B cell (primary cell): ENCODE measurements at regions of chr3 and their contacts with region 1.

Region 1: GRCh38 chr3:67790043-67790442 is 135.6 kb upstream of the SUCLG2 start:
- DNase-seq: peak; percentile 60
- ATAC-seq: peak; percentile 58
- H3K4me3 ChIP-seq: no peak overlapping the region
- H3K4me3 Mint-ChIP-seq: no peak overlapping the region
- H3K27ac ChIP-seq: no peak overlapping the region
- H3K27ac Mint-ChIP-seq: no peak overlapping the region
- H3K4me1 ChIP-seq: no peaks in the 10 kb centered on the region
- H3K4me1 Mint-ChIP-seq: no peaks in the 10 kb centered on the region
- H3K27me3 ChIP-seq: no peaks in the 10 kb centered on the region
- H3K27me3 Mint-ChIP-seq: peaks cover 6% of the 10 kb centered on the region
- CTCF ChIP-seq: peak; percentile 73

Region 2: GRCh38 chr3:67593761-67594244 is 196.2 kb before region 1 on chr3:
- CTCF ChIA-PET with region 1: no interaction called
- POLR2A ChIA-PET with region 1: no interaction called
- intact Hi-C with region 1: loop called (anchors 5 kb)
- DNase-seq: no peak
- ATAC-seq: no peak
- H3K4me3 ChIP-seq: no peak overlapping the region
- H3K4me3 Mint-ChIP-seq: no peak overlapping the region
- H3K27ac ChIP-seq: no peak overlapping the region
- H3K27ac Mint-ChIP-seq: no peak overlapping the region
- H3K4me1 ChIP-seq: no peaks in the 10 kb centered on the region
- H3K4me1 Mint-ChIP-seq: peaks cover 9% of the 10 kb centered on the region
- H3K27me3 ChIP-seq: no peaks in the 10 kb centered on the region
- H3K27me3 Mint-ChIP-seq: no peaks in the 10 kb centered on the region
- CTCF ChIP-seq: no peak

Region 3: GRCh38 chr3:67774676-67775075 is 15.4 kb before region 1 on chr3:
- CTCF ChIA-PET with region 1: no interaction called
- POLR2A ChIA-PET with region 1: no interaction called
- intact Hi-C with region 1: no loop called
- DNase-seq: no peak
- ATAC-seq: no peak
- H3K4me3 ChIP-seq: no peak overlapping the region
- H3K4me3 Mint-ChIP-seq: no peak overlapping the region
- H3K27ac ChIP-seq: no peak overlapping the region
- H3K27ac Mint-ChIP-seq: no peak overlapping the region
- H3K4me1 ChIP-seq: peaks cover 0 to 2% of the 10 kb centered on the region in 2 donors
- H3K4me1 Mint-ChIP-seq: peaks cover 10% of the 10 kb centered on the region
- H3K27me3 ChIP-seq: no peaks in the 10 kb centered on the region
- H3K27me3 Mint-ChIP-seq: peaks cover 6% of the 10 kb centered on the region
- CTCF ChIP-seq: no peak

Region 4: GRCh38 chr3:67854663-67855062 is 64.6 kb after region 1 on chr3:
- CTCF ChIA-PET with region 1: no interaction called
- POLR2A ChIA-PET with region 1: no interaction called
- intact Hi-C with region 1: no loop called
- DNase-seq: no peak
- ATAC-seq: no peak
- H3K4me3 ChIP-seq: no peak overlapping the region
- H3K4me3 Mint-ChIP-seq: no peak overlapping the region
- H3K27ac ChIP-seq: no peak overlapping the region
- H3K27ac Mint-ChIP-seq: no peak overlapping the region
- H3K4me1 ChIP-seq: no peaks in the 10 kb centered on the region
- H3K4me1 Mint-ChIP-seq: no peaks in the 10 kb centered on the region
- H3K27me3 ChIP-seq: no peaks in the 10 kb centered on the region
- H3K27me3 Mint-ChIP-seq: no peaks in the 10 kb centered on the region
- CTCF ChIP-seq: no peak

Region 5: DNA sequence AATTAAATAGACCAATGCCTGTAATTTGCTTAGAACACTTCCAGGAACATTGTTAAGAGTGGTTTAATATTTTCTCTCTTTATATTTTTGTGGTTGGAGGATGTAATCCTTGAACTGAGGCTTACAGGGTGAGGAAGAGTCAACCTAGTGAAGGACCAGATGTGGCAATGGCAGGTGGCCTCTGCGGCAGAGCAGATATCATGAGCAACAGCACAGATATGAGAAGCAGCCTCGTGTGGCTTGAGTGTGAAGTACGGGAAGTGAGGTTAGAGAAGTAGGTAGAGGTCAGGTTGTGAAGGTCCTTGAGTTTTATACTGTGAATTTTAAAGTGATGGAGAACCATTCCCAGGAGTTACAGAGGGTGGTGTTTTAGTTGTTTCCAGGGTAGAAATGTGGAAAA is 282.0 kb after region 1 on chr3:
- CTCF ChIA-PET with region 1: no interaction called
- POLR2A ChIA-PET with region 1: no interaction called
- intact Hi-C with region 1: no loop called
- DNase-seq: no peak
- ATAC-seq: no peak
- H3K4me3 ChIP-seq: no peak overlapping the region
- H3K4me3 Mint-ChIP-seq: no peak overlapping the region
- H3K27ac ChIP-seq: no peak overlapping the region
- H3K27ac Mint-ChIP-seq: no peak overlapping the region
- H3K4me1 ChIP-seq: no peaks in the 10 kb centered on the region
- H3K4me1 Mint-ChIP-seq: no peaks in the 10 kb centered on the region
- H3K27me3 ChIP-seq: no peaks in the 10 kb centered on the region
- H3K27me3 Mint-ChIP-seq: no peaks in the 10 kb centered on the region
- CTCF ChIP-seq: no peak

Region 6: GRCh38 chr3:68186733-68187132 is 396.7 kb after region 1 on chr3:
- CTCF ChIA-PET with region 1: no interaction called
- POLR2A ChIA-PET with region 1: no interaction called
- intact Hi-C with region 1: no loop called
- DNase-seq: no peak
- ATAC-seq: no peak
- H3K4me3 ChIP-seq: no peak overlapping the region
- H3K4me3 Mint-ChIP-seq: no peak overlapping the region
- H3K27ac ChIP-seq: no peak overlapping the region
- H3K27ac Mint-ChIP-seq: no peak overlapping the region
- H3K4me1 ChIP-seq: no peaks in the 10 kb centered on the region
- H3K4me1 Mint-ChIP-seq: no peaks in the 10 kb centered on the region
- H3K27me3 ChIP-seq: no peaks in the 10 kb centered on the region
- H3K27me3 Mint-ChIP-seq: no peaks in the 10 kb centered on the region
- CTCF ChIP-seq: no peak